Activated CD4-positive, alpha-beta memory T cell treated with anti-CD3 and anti-CD28 coated beads, Interleukin-2, amount 10 ng/mL, durations not matched to agents 7 days and 5 days (primary cell): ENCODE measurements at regions of chr1 and their contacts with region 1.

Region 1: DNA sequence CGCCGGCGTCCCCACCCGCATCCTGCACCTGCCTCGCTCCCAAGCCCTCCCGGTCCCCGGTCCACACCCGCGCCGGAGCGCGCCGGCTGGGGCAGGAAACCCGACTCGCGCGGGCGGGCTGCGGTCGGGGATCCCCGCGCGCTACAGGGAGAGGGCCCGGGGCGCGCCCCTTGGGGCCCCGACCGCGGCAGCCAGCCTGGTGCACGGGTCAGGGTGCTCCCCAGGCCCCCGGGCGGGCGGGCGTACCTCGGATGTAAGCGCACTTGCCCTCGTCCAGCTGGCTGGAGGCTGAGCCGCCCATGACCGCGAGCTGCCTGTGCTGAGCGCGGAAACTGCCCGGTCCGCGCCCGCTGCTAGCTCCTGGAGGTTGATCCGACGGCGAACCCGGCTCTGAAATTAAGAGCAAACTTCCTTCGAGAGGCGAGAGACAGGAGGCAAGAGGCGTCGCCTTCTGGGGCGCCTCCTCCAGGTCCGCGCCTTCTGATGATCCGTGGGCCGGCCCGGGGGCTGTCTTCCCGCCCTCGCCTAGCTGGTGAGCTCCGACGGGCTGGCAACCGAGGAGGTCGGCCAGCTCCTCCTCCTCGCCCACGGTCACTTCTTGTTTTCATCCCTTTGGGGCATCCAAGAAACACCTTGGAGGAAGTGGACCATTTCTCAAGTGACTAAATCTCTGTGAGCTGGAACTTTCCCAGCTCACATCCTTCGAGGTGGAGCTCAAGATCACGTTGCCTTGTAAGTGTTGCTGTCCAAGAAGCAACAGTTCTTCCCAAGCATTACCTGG is at the start of gene NIBAN1:
- DNase-seq: peak; percentile 76
- H3K4me3 Mint-ChIP-seq: peak within 1 kb of the TSS; percentile 90
- H3K27ac Mint-ChIP-seq: peak within 1 kb of the TSS; percentile 87
- H3K4me1 Mint-ChIP-seq: peaks cover 55% of the 10 kb centered on the region
- H3K27me3 Mint-ChIP-seq: peaks cover 3% of the 10 kb centered on the region
- total RNA-seq, gene NIBAN1: 68.8 to 71.7 TPM

Region 2: GRCh38 chr1:184743062-184743756 is 231.0 kb before region 1 on chr1:
- CTCF ChIA-PET with region 1: no interaction called
- POLR2A ChIA-PET with region 1: interaction called, 13 read pairs
- DNase-seq: no peak
- H3K4me3 Mint-ChIP-seq: no peak overlapping the region
- H3K27ac Mint-ChIP-seq: peak overlapping the region; percentile 84
- H3K4me1 Mint-ChIP-seq: peaks cover 66% of the 10 kb centered on the region
- H3K27me3 Mint-ChIP-seq: no peaks in the 10 kb centered on the region

Region 3: DNA sequence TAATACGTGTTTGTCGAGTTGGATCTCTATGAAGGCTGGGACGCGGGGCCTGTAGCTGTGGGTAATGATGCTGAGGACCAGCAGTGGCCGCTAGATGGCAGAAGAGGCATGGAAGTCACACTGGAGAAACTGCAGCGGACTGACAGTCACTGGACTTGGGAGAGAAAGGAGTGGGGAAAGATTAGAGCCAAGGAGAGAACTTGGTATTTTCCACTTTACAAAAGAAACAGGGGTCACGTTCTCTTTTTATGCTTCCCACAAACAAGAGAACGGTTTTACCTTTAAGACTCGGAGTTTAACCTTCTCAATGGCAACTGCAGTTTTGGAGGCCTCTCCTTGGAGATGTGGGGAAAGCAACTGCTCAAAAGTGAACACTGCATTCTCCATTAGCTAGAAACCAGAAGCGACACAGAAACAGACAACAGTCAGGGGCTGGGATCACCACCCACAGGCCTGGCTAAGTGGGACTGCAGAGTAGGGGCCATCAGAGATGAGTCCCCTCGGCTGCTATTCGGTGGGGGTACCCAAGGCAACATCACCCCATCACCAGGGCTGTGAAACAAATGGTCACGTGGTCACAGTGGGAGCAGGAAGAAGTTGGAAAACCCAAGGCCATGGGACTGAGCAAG is 168.5 kb before region 1 on chr1:
- CTCF ChIA-PET with region 1: interaction called, 88 read pairs
- POLR2A ChIA-PET with region 1: interaction called, 6 read pairs
- DNase-seq: peak; percentile 84
- H3K4me3 Mint-ChIP-seq: no peak overlapping the region
- H3K27ac Mint-ChIP-seq: no peak overlapping the region
- H3K4me1 Mint-ChIP-seq: peaks cover 5% of the 10 kb centered on the region
- H3K27me3 Mint-ChIP-seq: no peaks in the 10 kb centered on the region

Region 4: GRCh38 chr1:184866991-184867788 is 107.1 kb before region 1 on chr1:
- CTCF ChIA-PET with region 1: interaction called, 4 read pairs
- POLR2A ChIA-PET with region 1: interaction called, 38 read pairs
- DNase-seq: peak; percentile 76
- H3K4me3 Mint-ChIP-seq: peak overlapping the region; percentile 16
- H3K27ac Mint-ChIP-seq: peak overlapping the region; percentile 85
- H3K4me1 Mint-ChIP-seq: peaks cover 66% of the 10 kb centered on the region
- H3K27me3 Mint-ChIP-seq: no peaks in the 10 kb centered on the region

Region 5: DNA sequence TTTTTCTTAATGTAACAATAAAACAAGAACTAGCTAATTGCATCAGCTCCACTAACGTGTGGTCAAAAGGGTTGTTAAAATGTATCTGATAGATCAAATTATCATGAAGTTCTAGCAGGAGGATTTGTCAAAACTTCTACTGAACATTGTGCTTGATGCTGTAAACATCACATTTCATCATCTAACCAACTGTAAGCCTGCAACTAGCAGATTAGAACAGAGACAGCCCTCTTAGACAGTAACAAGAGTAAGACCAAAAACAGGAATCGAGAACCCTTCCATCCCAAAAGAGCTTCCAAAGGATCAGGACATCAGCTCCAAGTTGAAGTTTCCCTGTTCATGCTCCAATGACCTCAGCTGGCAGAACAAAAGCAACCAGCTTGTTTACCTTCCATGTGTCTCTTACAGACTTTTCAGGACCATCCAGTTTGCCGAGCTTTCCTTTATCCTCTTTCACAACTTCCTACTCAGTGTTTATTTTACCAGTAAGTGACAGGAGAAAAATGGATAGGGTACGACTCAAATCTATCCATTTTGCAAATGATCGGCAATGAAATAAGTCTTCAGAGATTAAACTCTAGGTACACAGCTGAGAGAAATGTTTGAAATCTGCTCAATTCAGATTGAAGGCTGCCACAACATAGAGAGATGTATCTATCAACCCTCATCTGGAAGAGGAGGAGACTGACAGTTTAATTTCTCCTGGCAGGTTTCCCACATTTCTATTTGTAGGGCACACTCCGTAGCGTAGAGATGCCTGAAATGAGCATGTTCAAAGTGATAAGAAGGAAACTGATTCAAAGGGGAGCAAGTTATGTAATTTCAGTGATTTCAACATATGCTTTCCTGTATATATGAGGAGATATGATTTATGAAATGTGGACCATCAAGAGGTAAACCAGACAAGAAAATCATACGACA is 44.3 kb before region 1 on chr1:
- CTCF ChIA-PET with region 1: no interaction called
- POLR2A ChIA-PET with region 1: no interaction called
- DNase-seq: no peak
- H3K4me3 Mint-ChIP-seq: no peak overlapping the region
- H3K27ac Mint-ChIP-seq: no peak overlapping the region
- H3K4me1 Mint-ChIP-seq: peaks cover 12% of the 10 kb centered on the region
- H3K27me3 Mint-ChIP-seq: no peaks in the 10 kb centered on the region

Region 6: DNA sequence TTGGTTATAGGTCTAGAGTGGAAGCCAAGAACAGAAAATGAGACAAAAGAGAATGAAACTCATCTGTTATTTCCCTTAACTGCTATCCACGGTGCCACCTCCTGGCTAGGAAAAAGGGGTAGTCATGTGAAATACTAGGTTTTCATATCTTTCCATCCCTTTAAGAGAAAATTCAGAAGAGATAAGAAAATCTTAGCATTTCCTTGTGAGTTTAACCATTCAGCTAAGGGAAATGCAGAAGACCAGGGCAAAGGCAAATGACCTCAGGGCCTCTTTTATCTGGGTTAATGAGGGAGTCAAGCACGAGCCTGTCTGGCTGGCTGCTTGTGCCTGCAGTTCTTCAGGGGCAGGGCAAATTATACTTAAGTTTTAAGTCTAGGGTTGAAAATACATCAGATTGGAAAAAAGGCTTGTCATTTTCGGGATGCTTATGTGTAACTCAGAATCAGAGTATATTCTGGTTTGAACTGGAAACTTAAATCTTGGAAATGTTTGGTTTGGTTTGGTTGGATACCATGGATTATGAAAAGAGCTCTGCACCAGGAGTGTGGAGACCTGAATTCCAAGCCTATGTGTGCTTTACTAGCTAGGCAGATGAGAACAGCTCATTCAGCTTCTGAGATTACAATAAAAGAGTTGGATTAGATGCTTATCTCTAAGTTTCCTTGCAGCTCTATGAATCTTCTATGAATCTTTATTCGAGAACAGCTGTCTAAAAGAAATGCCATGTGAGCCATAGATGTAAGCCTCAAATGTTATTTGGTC is 19.8 kb before region 1 on chr1:
- CTCF ChIA-PET with region 1: interaction called, 5 read pairs
- POLR2A ChIA-PET with region 1: interaction called, 18 read pairs
- DNase-seq: no peak
- H3K4me3 Mint-ChIP-seq: peak overlapping the region; percentile 10
- H3K27ac Mint-ChIP-seq: peak overlapping the region; percentile 47
- H3K4me1 Mint-ChIP-seq: peaks cover 37% of the 10 kb centered on the region
- H3K27me3 Mint-ChIP-seq: no peaks in the 10 kb centered on the region